MCF 10A (cell line): ENCODE measurements at regions of chrX and their contacts with region 1.

Region 1: GRCh38 chrX:144566592-144566991 is 680.7 kb upstream of the SPANXN1 start:
- DNase-seq: peak; percentile 38
- H3K4me3 Mint-ChIP-seq: no peak overlapping the region
- H3K27ac Mint-ChIP-seq: no peak overlapping the region
- H3K4me1 Mint-ChIP-seq: no peaks in the 10 kb centered on the region
- H3K27me3 Mint-ChIP-seq: no peaks in the 10 kb centered on the region
- CTCF ChIP-seq: no peak

Region 2: DNA sequence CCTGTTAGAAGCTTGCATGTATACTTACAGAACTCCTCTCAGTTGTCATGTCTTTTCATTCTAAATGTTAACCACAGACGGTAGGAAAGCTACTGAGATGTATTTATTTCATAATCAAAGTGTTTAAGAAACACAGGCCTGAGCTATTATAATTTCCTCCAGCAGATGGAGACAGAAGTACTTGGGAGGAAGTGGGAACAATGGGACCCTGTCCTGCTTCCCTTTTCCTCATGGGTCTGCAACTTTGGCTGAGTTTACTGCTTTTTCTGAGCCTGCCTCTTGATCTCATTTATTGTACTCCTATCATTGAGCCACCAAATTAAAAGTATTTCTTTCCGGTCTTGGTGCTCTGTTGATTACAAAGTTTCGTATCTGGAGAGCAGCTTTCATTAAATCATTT is 778.3 kb before region 1 on chrX:
- CTCF ChIA-PET with region 1: no interaction called
- POLR2A ChIA-PET with region 1: no interaction called
- intact Hi-C with region 1: loop called (anchors 10 kb)
- DNase-seq: peak; percentile 52
- H3K4me3 Mint-ChIP-seq: no peak overlapping the region
- H3K27ac Mint-ChIP-seq: no peak overlapping the region
- H3K4me1 Mint-ChIP-seq: no peaks in the 10 kb centered on the region
- H3K27me3 Mint-ChIP-seq: no peaks in the 10 kb centered on the region
- CTCF ChIP-seq: peak; percentile 73